ENCODE measurements at regions of chr14 and their contacts with region 1.

Region 1: DNA sequence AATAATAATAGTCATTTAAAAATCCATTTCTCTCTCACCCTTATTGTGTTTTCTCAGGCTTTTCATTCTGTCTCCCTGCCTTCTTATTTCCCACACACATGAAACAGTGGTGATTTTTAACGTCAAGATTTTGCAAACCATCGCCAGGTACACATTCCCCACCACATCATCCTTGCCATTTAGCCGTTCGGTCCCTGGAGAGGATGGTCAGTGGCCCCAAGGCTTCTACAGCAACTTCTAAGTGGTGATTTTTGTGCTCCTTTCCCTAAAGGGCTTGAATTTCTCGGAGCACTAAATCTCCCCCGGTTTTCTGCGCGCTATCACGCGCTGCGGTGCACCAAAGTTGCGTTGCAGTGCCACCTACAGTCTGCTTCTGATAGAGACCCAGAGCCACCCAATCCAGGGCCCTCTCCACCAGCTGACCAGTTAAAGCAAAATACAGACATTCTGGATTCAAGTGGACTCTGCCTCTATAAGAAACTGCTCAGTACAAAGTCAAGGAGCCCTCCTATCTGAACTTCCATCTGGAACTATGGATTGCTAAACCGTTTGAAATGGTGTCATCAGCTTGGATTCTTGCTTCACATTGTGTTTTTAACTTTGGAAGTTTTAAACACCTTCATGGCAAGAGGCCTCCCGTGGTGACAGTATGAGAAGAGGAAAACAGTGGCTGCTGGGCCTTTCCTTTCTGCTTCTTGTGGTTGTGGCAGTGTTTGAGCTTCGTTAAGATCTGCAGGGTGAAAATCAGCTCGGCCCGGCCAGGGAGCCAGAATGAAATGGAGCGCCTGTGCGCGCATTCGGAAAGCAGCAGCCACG is 234.0 kb downstream of the SPTSSA start:
- DNase-seq: peak in 1 of 2 donors; percentile 68
- H3K4me3 ChIP-seq: peak overlapping the region in 1 of 2 donors; percentile 50
- H3K27ac ChIP-seq: no peak overlapping the region
- H3K4me1 ChIP-seq: no peaks in the 10 kb centered on the region
- H3K27me3 ChIP-seq: no peaks in the 10 kb centered on the region
- CTCF ChIP-seq: peak; percentile 56 to 79 (median 74)

Region 2: DNA sequence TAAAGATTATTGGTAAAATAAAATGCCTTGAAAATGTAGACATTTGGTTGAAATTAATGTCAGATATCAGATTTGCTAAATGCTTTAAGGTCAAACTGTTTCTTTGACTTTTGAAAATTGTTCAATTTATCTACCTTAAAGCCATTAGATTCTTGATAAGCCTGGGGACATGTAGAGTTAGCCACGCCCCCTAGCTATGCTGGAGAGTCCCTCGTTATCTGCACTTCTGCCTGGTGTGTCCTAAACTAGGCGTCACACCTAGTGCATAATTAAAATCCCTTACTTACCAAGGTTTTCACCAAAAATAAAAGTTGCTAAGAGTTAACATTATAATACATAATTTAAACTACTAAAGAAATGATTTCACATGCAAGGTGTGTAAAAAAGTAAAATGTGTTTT is 356.6 kb before region 1 on chr14:
- intact Hi-C with region 1: no loop called
- DNase-seq: no peak
- H3K4me3 ChIP-seq: no peak overlapping the region
- H3K27ac ChIP-seq: no peak overlapping the region
- H3K4me1 ChIP-seq: no peaks in the 10 kb centered on the region
- H3K27me3 ChIP-seq: no peaks in the 10 kb centered on the region
- CTCF ChIP-seq: no peak

Region 3: GRCh38 chr14:34098045-34098984 is 129.7 kb before region 1 on chr14:
- intact Hi-C with region 1: loop called (anchors 2 kb)
- DNase-seq: no peak
- H3K4me3 ChIP-seq: no peak overlapping the region
- H3K27ac ChIP-seq: no peak overlapping the region
- H3K4me1 ChIP-seq: no peaks in the 10 kb centered on the region
- H3K27me3 ChIP-seq: no peaks in the 10 kb centered on the region
- CTCF ChIP-seq: peak; percentile 56 to 68 (median 59)

Region 4: GRCh38 chr14:34187519-34188044 is 40.5 kb before region 1 on chr14:
- intact Hi-C with region 1: no loop called
- DNase-seq: no peak
- H3K4me3 ChIP-seq: no peak overlapping the region
- H3K27ac ChIP-seq: no peak overlapping the region
- H3K4me1 ChIP-seq: no peaks in the 10 kb centered on the region
- H3K27me3 ChIP-seq: no peaks in the 10 kb centered on the region
- CTCF ChIP-seq: no peak

Region 5: DNA sequence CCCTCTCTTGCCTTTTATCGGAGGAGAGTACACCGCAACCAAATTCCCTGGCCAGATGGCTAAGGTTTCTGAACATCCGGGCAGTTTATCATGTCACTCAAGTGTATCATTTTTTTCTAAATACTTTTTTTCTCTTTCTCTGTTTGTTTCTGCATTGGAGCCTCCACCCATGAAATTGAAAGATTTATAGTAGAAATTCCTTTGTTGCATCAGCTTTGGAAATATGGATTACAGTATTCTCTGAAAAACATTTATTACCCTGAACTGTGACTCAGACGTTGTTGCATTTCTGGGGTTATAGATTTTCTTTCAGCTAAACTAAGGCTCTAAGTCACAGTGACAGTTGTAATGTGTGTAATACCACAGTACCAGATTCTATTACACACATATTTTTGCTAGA is 47.0 kb after region 1 on chr14:
- intact Hi-C with region 1: no loop called
- DNase-seq: no peak
- H3K4me3 ChIP-seq: no peak overlapping the region
- H3K27ac ChIP-seq: no peak overlapping the region
- H3K4me1 ChIP-seq: no peaks in the 10 kb centered on the region
- H3K27me3 ChIP-seq: no peaks in the 10 kb centered on the region
- CTCF ChIP-seq: no peak

Measured in ascending aorta (tissue), 2 donors.